Gastrocnemius medialis (tissue), 4 donors: ENCODE measurements at regions of chr16 and their contacts with region 1.

Region 1: DNA sequence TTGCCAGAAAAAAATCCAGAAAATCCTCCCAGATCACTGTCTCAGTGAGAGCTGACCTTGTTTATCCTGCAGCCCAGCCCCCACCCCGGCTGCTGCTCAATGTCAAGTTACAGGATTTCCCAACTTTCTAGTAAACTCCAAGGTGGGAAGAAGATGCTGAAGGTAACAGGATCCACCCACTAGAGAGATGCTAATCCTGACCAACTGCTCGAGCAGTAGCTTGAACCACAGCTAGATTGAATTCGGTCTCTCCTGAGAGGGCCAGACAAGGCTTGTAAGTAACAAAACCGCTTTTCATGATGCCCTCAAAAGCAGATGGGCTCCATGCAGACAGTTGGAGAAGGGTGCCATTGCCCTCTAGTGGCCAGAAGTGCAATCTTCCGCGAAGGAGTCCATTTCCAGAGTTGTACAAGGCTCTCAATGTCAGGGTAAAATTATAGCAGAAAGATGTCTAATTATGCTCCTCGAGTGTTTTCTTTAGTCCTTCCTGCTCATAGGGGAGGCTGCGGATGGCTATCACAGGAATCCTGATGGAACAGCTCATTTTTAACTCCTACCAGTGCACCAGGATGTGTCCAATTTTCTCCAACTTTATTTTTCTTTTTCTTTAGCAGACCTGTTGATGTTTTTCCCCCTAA is 3.9 kb downstream of the CDH11 start:
- DNase-seq: peak in 1 of 2 donors; percentile 61
- ATAC-seq: peak; percentile 78 to 84
- H3K4me3 ChIP-seq: no peak overlapping the region
- H3K27ac ChIP-seq: peak overlapping the region in 1 of 4 donors; percentile 48
- H3K4me1 ChIP-seq: peaks cover 0 to 13% of the 10 kb centered on the region in 2 donors
- H3K27me3 ChIP-seq: peaks cover 4 to 23% (median 9%) of the 10 kb centered on the region in 3 donors
- CTCF ChIP-seq: peak; percentile 80 to 88 (median 87)
- POLR2A ChIP-seq: no peak

Region 2: DNA sequence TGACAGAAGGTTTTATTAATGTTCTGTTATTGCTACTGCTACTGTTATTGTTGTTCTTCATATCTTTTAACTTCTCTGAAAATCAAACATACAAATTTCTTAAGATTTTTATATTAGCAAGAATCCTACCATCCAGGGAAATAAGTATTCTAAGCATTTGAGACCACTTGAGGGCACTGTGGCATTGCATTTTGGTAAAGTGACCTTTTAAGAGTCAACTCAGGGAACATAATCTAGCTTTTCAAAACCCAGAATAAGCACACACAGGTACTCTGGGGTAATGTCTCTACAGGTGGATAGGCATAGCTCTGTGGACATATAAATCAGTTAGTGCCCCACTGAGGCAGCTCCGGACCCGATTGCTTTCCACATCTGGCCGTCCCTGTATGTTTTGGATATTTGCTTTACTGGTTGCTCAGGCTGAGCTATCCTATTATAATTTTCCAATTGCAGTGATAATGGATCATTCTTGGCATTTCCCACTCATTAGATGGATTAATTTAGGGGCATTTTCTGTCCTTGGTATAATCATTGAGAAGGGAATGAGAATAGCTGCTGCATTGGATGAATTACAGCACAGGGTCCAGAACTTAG is 1656.6 kb before region 1 on chr16:
- in situ Hi-C with region 1: loop called in 1 of 4 experiments (anchors 25 kb)
- intact Hi-C with region 1: no loop called
- DNase-seq: no peak
- ATAC-seq: no peak
- H3K4me3 ChIP-seq: no peak overlapping the region
- H3K27ac ChIP-seq: no peak overlapping the region
- H3K4me1 ChIP-seq: no peaks in the 10 kb centered on the region
- H3K27me3 ChIP-seq: no peaks in the 10 kb centered on the region
- CTCF ChIP-seq: no peak
- POLR2A ChIP-seq: no peak

Region 3: DNA sequence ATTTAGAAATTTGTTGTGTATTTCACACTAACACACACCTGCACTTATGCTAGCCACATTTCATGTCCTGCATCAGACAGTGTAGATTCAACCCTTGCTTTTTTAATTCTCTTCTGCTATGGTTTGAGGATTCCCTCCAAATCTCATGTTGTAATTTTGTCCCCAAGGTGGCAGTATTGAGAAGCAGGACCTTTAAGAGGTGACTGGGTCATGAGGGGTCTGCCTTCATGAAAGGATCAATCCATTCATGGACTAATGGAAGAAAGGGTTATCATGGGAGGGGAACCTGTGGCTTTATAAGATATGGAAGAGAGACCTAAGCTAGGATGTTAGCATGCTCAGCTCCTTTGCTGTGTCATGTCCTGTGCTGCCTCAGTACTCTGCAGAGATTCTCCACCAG is 1028.2 kb before region 1 on chr16:
- in situ Hi-C with region 1: loop called in 1 of 4 experiments (anchors 25 kb)
- intact Hi-C with region 1: no loop called
- DNase-seq: no peak
- ATAC-seq: no peak
- H3K4me3 ChIP-seq: no peak overlapping the region
- H3K27ac ChIP-seq: no peak overlapping the region
- H3K4me1 ChIP-seq: no peaks in the 10 kb centered on the region
- H3K27me3 ChIP-seq: no peaks in the 10 kb centered on the region
- CTCF ChIP-seq: peak in 3 of 5 experiments; percentile 24 to 39 (median 25)
- POLR2A ChIP-seq: no peak

Region 4: DNA sequence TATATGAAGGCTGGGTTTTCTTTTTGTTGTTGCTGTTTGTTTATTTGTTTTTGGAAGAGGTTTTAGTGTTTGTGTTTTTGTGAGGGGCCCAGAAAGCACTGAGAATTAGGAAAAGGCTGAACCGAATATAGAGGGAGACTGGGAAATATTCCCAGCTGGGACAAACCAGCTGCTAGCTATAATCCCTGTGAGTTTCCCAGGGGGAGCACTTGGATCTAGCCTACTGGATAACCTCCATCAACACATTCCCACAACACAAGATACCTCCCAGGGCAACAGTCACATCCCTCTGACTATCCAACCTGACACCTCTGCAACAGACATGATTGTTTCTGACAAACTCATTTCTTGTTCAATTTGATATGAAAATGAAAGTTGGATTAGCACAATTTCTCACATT is 12.8 kb before region 1 on chr16:
- in situ Hi-C with region 1: no loop called
- intact Hi-C with region 1: loop called (anchors 2 kb)
- DNase-seq: no peak
- ATAC-seq: no peak
- H3K4me3 ChIP-seq: no peak overlapping the region
- H3K27ac ChIP-seq: no peak overlapping the region
- H3K4me1 ChIP-seq: no peaks in the 10 kb centered on the region
- H3K27me3 ChIP-seq: no peaks in the 10 kb centered on the region
- CTCF ChIP-seq: no peak
- POLR2A ChIP-seq: no peak

Region 5: GRCh38 chr16:66266436-66267291 is 1148.7 kb after region 1 on chr16:
- in situ Hi-C with region 1: no loop called
- intact Hi-C with region 1: loop called (anchors 5 kb)
- DNase-seq: peak; percentile 29 to 70
- ATAC-seq: peak; percentile 59 to 68
- H3K4me3 ChIP-seq: no peak overlapping the region
- H3K27ac ChIP-seq: peak overlapping the region in 3 of 4 donors; percentile 4 to 34 (median 9)
- H3K4me1 ChIP-seq: peaks cover 0 to 2% of the 10 kb centered on the region in 2 donors
- H3K27me3 ChIP-seq: peaks cover 0 to 3% (median 0%) of the 10 kb centered on the region in 3 donors
- CTCF ChIP-seq: no peak
- POLR2A ChIP-seq: no peak